Mammary epithelial cell (primary cell): ENCODE measurements at regions of chr3 and their contacts with region 1.

Region 1: GRCh38 chr3:58414538-58415197 is 19.0 kb downstream of the PDHB start:
- DNase-seq: peak; percentile 52
- H3K4me3 ChIP-seq: no peak overlapping the region
- H3K27ac ChIP-seq: no peak overlapping the region
- H3K4me1 ChIP-seq: no peaks in the 10 kb centered on the region
- H3K27me3 ChIP-seq: no peaks in the 10 kb centered on the region
- CTCF ChIP-seq: peak; percentile 75 to 84

Region 2: GRCh38 chr3:58177747-58178527 is 236.7 kb before region 1 on chr3:
- CTCF ChIA-PET with region 1: no interaction called
- dilution Hi-C with region 1: loop called (anchors 25 kb)
- in situ Hi-C with region 1: loop called in 1 of 2 experiments (anchors 25 kb)
- intact Hi-C with region 1: no loop called
- DNase-seq: peak; percentile 70
- H3K4me3 ChIP-seq: peak overlapping the region in 1 of 3 experiments; percentile 32
- H3K27ac ChIP-seq: no peak overlapping the region
- H3K4me1 ChIP-seq: peaks cover 61% of the 10 kb centered on the region
- H3K27me3 ChIP-seq: no peaks in the 10 kb centered on the region
- CTCF ChIP-seq: peak; percentile 53 to 95

Region 3: DNA sequence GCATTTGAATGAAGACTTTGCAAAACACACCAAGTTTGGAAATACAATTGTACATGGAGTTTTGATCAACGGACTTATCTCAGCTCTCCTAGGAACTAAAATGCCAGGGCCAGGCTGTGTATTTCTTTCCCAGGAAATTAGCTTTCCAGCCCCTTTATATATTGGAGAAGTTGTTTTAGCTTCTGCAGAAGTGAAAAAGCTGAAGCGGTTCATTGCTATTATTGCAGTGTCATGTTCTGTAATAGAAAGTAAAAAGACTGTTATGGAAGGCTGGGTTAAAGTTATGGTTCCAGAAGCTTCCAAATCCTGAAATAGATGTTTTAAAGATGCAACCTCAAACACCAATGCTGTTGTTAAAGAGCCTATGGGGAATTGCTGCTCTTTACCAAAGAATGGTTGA is 96.9 kb before region 1 on chr3:
- CTCF ChIA-PET with region 1: no interaction called
- dilution Hi-C with region 1: loop called (anchors 5 kb)
- in situ Hi-C with region 1: loop called in 1 of 2 experiments (anchors 5 kb)
- intact Hi-C with region 1: loop called (anchors 1 kb)
- DNase-seq: no peak
- H3K4me3 ChIP-seq: no peak overlapping the region
- H3K27ac ChIP-seq: no peak overlapping the region
- H3K4me1 ChIP-seq: no peaks in the 10 kb centered on the region
- H3K27me3 ChIP-seq: no peaks in the 10 kb centered on the region
- CTCF ChIP-seq: no peak

Region 4: GRCh38 chr3:58324391-58325390 is 90.0 kb before region 1 on chr3:
- CTCF ChIA-PET with region 1: no interaction called
- dilution Hi-C with region 1: loop called (anchors 5 kb)
- in situ Hi-C with region 1: loop called in 1 of 2 experiments (anchors 5 kb)
- intact Hi-C with region 1: loop called (anchors 1 kb)
- DNase-seq: peak; percentile 19
- H3K4me3 ChIP-seq: no peak overlapping the region
- H3K27ac ChIP-seq: no peak overlapping the region
- H3K4me1 ChIP-seq: peaks cover 10% of the 10 kb centered on the region
- H3K27me3 ChIP-seq: no peaks in the 10 kb centered on the region
- CTCF ChIP-seq: no peak

Region 5: GRCh38 chr3:58332575-58333188 is 82.0 kb before region 1 on chr3 and contains the start of gene PXK:
- CTCF ChIA-PET with region 1: no interaction called
- dilution Hi-C with region 1: no loop called
- in situ Hi-C with region 1: loop called in 1 of 2 experiments (anchors 5 kb)
- intact Hi-C with region 1: loop called (anchors 1 kb)
- DNase-seq: peak; percentile 75
- H3K4me3 ChIP-seq: peak within 1 kb of the TSS; percentile 79 to 85 (median 84)
- H3K27ac ChIP-seq: no peak within 1 kb of the TSS
- H3K4me1 ChIP-seq: peaks cover 34% of the 10 kb centered on the region
- H3K27me3 ChIP-seq: no peaks in the 10 kb centered on the region
- CTCF ChIP-seq: peak in 1 of 2 donors; percentile 5
- total RNA-seq, gene PXK: 39.6 to 42.2 TPM

Region 6: DNA sequence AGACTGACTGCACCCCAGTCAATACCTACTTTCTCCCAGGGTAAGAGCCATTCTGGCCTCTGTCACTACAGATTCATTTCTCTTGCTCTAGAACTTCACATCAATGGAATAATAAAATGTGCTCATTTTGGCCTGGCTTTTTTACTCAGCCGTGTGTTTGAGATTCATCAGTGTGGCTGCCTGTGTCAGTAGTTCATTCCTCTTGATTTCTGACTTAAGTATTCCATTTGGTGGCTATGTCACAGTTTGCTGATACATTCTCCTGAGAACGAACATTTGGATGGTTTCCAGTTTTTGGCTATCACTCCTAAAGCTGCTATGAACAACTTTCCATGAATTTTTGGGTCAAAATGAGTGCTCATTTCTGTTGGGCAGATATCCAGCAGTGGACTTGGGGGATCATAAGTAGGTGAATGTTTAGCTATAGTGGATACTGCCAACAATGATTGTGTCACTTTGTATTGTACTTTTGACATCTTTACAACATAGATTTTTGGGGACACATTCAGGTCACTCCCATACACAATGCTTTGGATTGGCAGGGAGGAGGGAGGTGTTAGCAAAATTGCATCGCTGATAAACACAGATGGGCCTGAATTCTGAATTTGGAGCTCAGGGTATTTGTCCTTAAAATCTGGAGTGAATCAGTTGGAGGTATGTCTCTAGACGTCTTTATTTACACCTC is 182.3 kb after region 1 on chr3:
- CTCF ChIA-PET with region 1: no interaction called
- dilution Hi-C with region 1: no loop called
- in situ Hi-C with region 1: no loop called
- intact Hi-C with region 1: no loop called
- DNase-seq: no peak
- H3K4me3 ChIP-seq: no peak overlapping the region
- H3K27ac ChIP-seq: no peak overlapping the region
- H3K4me1 ChIP-seq: no peaks in the 10 kb centered on the region
- H3K27me3 ChIP-seq: peaks cover 2% of the 10 kb centered on the region
- CTCF ChIP-seq: no peak